Activated B cell treated with CpG ODN at 0.5 μM for 24 hours (primary cell): ENCODE measurements at regions of chr2 and their contacts with region 1.

Region 1: GRCh38 chr2:30231212-30231995 is at the start of gene LBH:
- DNase-seq: peak; percentile 78
- ATAC-seq: peak; percentile 58
- H3K4me3 Mint-ChIP-seq: peak within 1 kb of the TSS; percentile 93
- H3K27ac Mint-ChIP-seq: peak within 1 kb of the TSS; percentile 94
- H3K4me1 Mint-ChIP-seq: peaks cover 52% of the 10 kb centered on the region
- H3K27me3 Mint-ChIP-seq: no peaks in the 10 kb centered on the region
- CTCF ChIP-seq: no peak
- total RNA-seq, gene LBH: 120 and 131 TPM in 2 replicates

Region 2: GRCh38 chr2:30146438-30147147 is 84.8 kb before region 1 on chr2 and contains the start of gene YPEL5:
- CTCF ChIA-PET with region 1: interaction called, 5 read pairs
- POLR2A ChIA-PET with region 1: interaction called, 59 read pairs
- intact Hi-C with region 1: loop called (anchors 1 kb)
- DNase-seq: peak; percentile 98
- ATAC-seq: peak; percentile 85
- H3K4me3 Mint-ChIP-seq: peak within 1 kb of the TSS; percentile 86
- H3K27ac Mint-ChIP-seq: peak within 1 kb of the TSS; percentile 99
- H3K4me1 Mint-ChIP-seq: peaks cover 50% of the 10 kb centered on the region
- H3K27me3 Mint-ChIP-seq: no peaks in the 10 kb centered on the region
- CTCF ChIP-seq: no peak
- total RNA-seq, gene YPEL5: 56.7 and 57.4 TPM in 2 replicates

Region 3: GRCh38 chr2:30245364-30245763 is 14.0 kb after region 1 on chr2:
- CTCF ChIA-PET with region 1: interaction called, 3 read pairs
- POLR2A ChIA-PET with region 1: interaction called, 12 read pairs
- intact Hi-C with region 1: loop called (anchors 1 kb)
- DNase-seq: no peak
- ATAC-seq: no peak
- H3K4me3 Mint-ChIP-seq: no peak overlapping the region
- H3K27ac Mint-ChIP-seq: peak overlapping the region; percentile 12
- H3K4me1 Mint-ChIP-seq: peaks cover 85% of the 10 kb centered on the region
- H3K27me3 Mint-ChIP-seq: no peaks in the 10 kb centered on the region
- CTCF ChIP-seq: no peak

Region 4: GRCh38 chr2:30287857-30288513 is 56.6 kb after region 1 on chr2:
- CTCF ChIA-PET with region 1: interaction called, 4 read pairs
- POLR2A ChIA-PET with region 1: interaction called, 102 read pairs
- intact Hi-C with region 1: loop called (anchors 1 kb)
- DNase-seq: peak; percentile 53
- ATAC-seq: peak; percentile 83
- H3K4me3 Mint-ChIP-seq: peak overlapping the region; percentile 83
- H3K27ac Mint-ChIP-seq: peak overlapping the region; percentile 92
- H3K4me1 Mint-ChIP-seq: peaks cover 92% of the 10 kb centered on the region
- H3K27me3 Mint-ChIP-seq: no peaks in the 10 kb centered on the region
- CTCF ChIP-seq: no peak

Region 5: DNA sequence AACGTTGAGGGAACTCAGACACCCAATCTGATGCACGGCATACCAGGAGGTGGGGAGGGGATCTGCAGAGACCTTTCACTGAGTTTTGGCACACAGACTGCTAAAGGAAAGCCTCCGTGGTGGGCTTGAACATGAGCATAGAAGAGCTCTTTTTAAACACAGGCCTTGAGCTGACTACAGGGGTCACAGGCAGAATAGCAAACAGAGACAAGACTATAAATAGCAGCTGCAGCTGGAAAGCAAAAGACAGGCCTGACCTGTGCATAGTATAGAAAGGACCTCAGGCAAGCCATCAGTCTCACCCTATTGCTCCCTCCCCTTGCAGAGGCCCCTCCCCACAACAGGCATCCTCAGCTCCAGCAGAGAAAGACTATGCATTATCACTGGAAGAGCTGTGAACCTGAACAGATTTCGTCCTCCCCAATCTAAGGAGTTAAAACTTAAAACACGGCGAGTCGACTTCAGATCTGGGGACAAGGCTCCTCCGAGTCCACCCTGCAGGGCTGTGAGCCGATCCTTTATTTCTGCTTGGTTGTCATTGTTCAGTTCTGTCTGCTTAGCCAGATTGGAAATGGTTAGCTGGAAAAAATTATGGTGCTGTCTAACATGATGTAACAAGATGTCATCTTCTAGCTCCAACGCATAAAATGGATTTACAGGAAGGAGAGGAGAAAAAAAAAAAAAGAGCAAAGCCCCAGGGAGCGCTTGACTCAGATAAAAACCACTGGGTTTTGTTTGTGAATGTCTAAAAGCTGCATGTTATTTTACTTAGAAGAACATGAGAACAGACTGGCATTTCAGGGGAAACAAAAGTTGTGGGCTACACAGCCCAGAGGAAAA is 190.4 kb after region 1 on chr2:
- CTCF ChIA-PET with region 1: no interaction called
- POLR2A ChIA-PET with region 1: interaction called, 29 read pairs
- intact Hi-C with region 1: no loop called
- DNase-seq: no peak
- ATAC-seq: peak; percentile 60
- H3K4me3 Mint-ChIP-seq: peak overlapping the region; percentile 39
- H3K27ac Mint-ChIP-seq: peak overlapping the region; percentile 82
- H3K4me1 Mint-ChIP-seq: peaks cover 42% of the 10 kb centered on the region
- H3K27me3 Mint-ChIP-seq: no peaks in the 10 kb centered on the region
- CTCF ChIP-seq: no peak

Region 6: DNA sequence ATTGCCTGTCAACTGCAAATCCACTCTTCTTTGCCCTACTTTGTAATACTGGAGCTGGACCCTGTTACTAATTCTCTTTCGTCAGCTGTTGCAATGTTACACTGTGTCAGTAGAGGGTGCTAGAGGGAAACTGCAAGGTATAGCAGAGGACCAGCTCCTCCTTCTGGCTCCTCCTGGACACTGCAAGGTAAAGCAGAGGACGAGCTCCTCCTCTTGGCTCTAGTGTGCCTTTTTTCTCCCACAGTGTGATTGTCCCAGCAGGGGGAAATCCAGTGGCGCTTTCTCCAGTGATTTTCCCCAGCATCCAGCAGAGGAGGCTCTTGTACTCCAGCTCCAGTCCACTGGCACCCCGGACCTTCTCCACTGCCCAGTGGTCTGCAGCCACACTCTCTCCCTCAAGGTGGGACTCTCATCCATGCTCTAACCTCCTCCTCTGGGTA is 480.3 kb after region 1 on chr2:
- CTCF ChIA-PET with region 1: interaction called, 12 read pairs
- POLR2A ChIA-PET with region 1: interaction called, 7 read pairs
- intact Hi-C with region 1: loop called (anchors 1 kb)
- DNase-seq: peak; percentile 57
- ATAC-seq: peak; percentile 98
- H3K4me3 Mint-ChIP-seq: no peak overlapping the region
- H3K27ac Mint-ChIP-seq: no peak overlapping the region
- H3K4me1 Mint-ChIP-seq: peaks cover 11% of the 10 kb centered on the region
- H3K27me3 Mint-ChIP-seq: no peaks in the 10 kb centered on the region
- CTCF ChIP-seq: peak; percentile 79